ENCODE measurements at regions of chr19 and their contacts with region 1.

Region 1: DNA sequence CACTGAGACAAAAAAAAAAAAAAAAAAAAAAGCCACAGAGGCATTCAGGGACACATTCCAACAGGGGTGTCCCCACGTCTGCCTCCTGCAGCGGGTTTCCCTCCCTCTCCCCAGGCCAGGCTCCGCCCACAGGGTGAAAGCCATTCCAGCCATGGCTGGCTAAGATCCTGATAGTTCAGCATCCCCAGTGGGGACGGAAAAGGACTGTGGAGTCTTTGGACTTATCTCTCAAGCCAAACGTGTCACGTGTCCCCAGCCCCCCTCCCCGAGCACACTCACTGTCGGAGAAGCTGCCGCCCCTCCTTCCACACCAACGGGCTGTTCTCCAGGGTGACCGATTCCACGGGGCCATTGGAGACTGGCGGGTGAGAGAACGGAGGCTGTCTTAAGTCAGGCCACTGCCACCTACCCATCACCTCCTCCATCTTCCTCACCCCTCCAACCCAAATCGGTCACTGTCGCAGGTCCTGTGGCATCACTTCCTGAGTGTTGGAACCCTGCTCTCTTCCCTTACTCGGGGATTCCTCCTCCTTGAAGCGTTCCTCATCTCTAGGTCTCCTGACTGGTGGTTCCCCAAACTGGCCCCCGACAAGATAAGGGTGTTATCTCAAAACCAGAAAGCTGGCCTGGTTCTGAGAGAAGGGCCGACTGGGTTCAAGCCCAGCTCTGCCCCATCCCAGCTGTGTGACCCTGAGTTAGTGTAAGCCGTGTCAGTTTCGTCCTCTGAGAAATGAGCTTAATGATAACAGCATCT is 9.1 kb upstream of the FKRP start:
- DNase-seq: no peak
- CTCF ChIP-seq: no peak

Region 2: DNA sequence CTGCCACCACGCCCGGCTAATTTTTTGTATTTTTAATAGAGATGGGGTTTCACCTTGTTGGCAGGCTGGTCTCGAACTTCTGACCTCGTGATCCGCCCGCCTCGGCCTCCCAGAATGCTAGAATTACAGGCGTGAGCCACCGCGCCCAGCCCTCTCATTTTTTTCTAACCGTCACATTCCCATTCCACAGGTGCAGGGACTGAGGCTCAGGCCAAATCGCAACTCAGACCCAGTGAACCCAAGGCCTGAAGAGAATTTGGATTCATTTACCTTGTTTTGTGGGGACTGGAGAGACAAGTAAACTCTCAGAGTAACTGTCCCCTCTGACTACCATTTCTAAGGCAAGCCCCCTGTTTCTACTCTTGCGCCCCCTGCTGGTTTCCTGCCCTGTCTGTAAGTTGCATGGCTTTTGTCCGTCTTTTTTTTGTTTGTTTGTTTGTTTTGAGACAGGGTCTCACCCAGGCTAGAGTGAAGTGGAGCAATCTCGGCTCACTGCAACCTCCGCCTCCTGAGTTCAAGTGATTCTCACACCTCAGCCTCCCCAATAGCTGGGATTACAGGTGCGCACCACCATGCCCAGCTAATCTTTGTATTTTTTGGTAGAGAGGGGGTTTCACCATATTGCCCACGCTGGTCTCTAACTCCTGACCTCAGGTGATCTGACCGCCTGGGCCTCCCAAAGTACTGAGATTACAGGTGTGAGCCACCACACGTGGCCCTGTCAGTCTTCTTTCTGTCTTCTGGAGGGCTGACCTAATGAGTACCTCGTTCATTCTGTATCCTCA is 11.8 kb after region 1 on chr19:
- CTCF ChIA-PET with region 1: interaction called, 11 read pairs
- POLR2A ChIA-PET with region 1: interaction called, 3 read pairs
- DNase-seq: peak; percentile 64
- CTCF ChIP-seq: peak; percentile 64

Region 3: DNA sequence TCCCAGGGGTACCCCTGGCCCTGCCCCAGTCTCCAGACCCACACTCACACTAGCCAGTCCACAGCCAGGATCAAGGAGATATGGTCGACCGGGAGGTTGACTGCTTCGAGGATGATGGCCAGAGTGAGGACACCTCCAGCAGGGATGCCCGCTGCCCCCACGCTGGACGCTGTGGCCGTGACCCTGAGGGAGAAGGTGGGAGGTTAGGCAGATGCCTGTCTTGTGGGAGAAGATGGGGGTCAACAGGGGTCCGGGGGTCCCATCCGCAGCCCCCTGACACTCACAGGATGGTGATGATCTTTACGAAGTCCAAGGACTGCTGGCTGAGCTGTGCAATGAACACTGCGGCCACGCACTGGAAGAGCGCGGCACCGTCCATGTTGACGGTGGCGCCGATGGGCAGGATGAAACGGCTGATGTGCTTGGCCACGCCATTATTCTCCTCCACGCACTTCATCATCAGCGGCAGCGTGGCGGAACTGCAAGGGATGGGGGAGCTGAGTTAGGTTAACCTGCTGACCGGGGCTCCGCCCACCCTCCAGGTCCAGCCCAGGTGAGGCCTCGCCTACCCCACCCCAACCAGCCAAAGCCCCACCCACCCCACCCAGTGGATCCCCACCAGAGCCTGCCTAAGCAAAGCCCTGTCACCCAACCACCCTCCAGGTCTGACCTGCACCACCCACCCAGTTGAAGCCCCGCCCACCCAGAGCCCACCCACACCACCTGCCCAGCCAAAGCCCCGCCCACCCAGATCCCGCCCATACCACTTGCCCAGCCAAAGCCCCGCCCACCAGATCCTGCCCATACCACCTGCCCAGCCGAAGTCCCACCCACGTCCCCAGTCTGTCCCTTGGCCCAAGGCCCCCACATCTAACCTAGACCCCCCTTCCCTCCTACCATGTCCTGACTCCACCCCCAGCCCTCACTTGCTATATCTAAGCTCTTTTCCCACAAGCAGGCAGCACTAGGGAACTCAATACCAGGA is 40.5 kb after region 1 on chr19:
- CTCF ChIA-PET with region 1: no interaction called
- POLR2A ChIA-PET with region 1: interaction called, 11 read pairs
- DNase-seq: peak; percentile 40
- CTCF ChIP-seq: no peak

Measured in GM10248 (cell line).